CD8-positive, alpha-beta T cell (primary cell): ENCODE measurements at regions of chr12 and their contacts with region 1.

Region 1: DNA sequence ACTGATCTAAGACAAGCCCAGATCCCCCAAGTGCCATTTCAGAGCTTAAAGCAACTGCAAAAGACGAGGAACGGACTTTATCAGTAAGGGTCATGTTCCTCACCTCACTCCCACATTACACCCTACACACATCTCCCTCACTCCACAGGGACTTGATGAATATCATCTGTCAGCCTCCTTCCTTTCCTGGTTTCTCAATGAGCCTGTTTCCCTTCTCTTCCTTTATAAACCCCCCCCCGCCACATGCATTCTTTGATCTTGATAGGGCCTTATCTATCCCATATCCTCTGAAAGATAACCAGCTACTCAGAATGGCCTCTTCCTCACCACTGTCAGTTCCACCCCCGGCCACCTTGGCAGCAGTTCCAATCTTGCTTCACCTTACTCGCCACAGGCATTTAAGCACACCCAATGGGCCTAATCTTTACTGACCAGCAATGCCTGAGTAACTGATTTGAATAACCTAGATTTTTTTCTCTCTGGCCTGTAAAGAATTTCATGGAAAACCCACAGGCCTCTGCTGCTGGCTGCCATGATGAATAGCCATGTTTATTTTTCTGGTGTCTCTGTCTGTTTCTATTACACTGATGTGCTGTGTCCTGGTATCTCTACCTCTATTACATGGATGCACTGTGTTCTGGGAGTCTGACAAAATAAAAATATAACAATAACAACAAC is 138.7 kb downstream of the PHLDA1 start:
- DNase-seq: no peak
- ATAC-seq: no peak
- H3K4me3 ChIP-seq: no peak overlapping the region
- H3K4me3 Mint-ChIP-seq: no peak overlapping the region
- H3K27ac ChIP-seq: no peak overlapping the region
- H3K27ac Mint-ChIP-seq: no peak overlapping the region
- H3K4me1 ChIP-seq: no peaks in the 10 kb centered on the region
- H3K4me1 Mint-ChIP-seq: no peaks in the 10 kb centered on the region
- H3K27me3 ChIP-seq: no peaks in the 10 kb centered on the region
- H3K27me3 Mint-ChIP-seq: peaks cover 7% of the 10 kb centered on the region
- CTCF ChIP-seq: no peak

Region 2: DNA sequence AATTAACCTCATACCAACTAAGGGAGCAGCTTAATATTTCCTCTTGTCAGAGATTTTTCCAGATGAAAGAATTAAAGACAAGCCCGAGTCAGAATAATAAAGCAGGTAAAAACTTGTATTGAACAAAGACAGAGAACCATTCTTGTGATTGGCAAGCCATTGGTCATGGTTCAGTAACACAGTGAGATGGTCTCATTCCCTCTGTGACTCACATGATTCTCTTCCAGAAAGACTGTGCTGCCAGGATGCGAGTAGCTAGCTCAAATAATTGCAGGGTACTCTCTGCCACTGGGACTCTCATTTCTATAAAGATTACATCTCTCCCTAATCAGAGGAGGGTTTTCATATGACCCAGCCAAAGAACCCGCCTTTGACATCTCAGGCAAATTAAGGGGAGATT is 40.7 kb before region 1 on chr12:
- CTCF ChIA-PET with region 1: no interaction called
- POLR2A ChIA-PET with region 1: no interaction called
- intact Hi-C with region 1: loop called in 1 of 2 experiments (anchors 1 kb)
- DNase-seq: no peak
- ATAC-seq: no peak
- H3K4me3 ChIP-seq: no peak overlapping the region
- H3K4me3 Mint-ChIP-seq: no peak overlapping the region
- H3K27ac ChIP-seq: no peak overlapping the region
- H3K27ac Mint-ChIP-seq: no peak overlapping the region
- H3K4me1 ChIP-seq: no peaks in the 10 kb centered on the region
- H3K4me1 Mint-ChIP-seq: no peaks in the 10 kb centered on the region
- H3K27me3 ChIP-seq: no peaks in the 10 kb centered on the region
- H3K27me3 Mint-ChIP-seq: peaks cover 11% of the 10 kb centered on the region
- CTCF ChIP-seq: no peak

Region 3: DNA sequence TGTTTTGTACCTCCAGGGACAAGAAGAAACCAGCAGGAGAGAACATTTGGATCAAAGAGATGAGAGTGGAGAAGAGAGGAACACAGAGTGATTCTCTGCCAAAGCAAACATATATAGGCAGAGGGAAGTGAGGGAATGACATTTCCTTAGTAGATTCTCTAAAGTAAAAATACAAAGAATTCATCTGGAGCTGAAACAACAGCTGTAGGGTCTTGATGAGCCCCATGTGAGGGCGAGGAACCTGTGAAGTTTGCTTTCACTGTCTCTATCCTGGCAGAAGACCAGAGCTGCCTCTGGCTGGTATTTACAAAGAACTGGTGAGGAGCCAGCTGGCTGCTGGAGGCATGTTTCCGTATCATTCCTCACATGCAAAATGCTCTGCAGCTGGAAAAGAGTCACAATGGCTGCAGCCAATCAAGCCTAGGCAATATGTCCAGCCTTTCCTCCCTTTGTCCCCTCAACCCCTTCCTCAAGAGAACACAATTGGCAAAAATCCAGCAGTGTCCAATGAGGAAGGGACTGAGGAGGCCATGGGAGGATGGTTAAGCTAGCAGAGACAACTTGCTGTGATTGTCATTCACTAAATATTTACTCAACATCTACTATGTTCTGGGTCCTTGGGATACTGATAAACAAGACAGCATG is 16.2 kb after region 1 on chr12:
- CTCF ChIA-PET with region 1: no interaction called
- POLR2A ChIA-PET with region 1: no interaction called
- intact Hi-C with region 1: no loop called
- DNase-seq: no peak
- ATAC-seq: no peak
- H3K4me3 ChIP-seq: no peak overlapping the region
- H3K4me3 Mint-ChIP-seq: no peak overlapping the region
- H3K27ac ChIP-seq: no peak overlapping the region
- H3K27ac Mint-ChIP-seq: no peak overlapping the region
- H3K4me1 ChIP-seq: no peaks in the 10 kb centered on the region
- H3K4me1 Mint-ChIP-seq: no peaks in the 10 kb centered on the region
- H3K27me3 ChIP-seq: no peaks in the 10 kb centered on the region
- H3K27me3 Mint-ChIP-seq: no peaks in the 10 kb centered on the region
- CTCF ChIP-seq: no peak